ENCODE measurements at regions of chr2 and their contacts with region 1.

Region 1: GRCh38 chr2:73091164-73091563 is 19.7 kb upstream of the SFXN5 start:
- DNase-seq: no peak
- H3K4me3 ChIP-seq: no peak overlapping the region
- H3K27ac ChIP-seq: no peak overlapping the region
- H3K4me1 ChIP-seq: no peaks in the 10 kb centered on the region; a peak in 1 of 7 replicates
- H3K27me3 ChIP-seq: no peaks in the 10 kb centered on the region
- CTCF ChIP-seq: no peak
- EP300 ChIP-seq: no peak
- POLR2A ChIP-seq: no peak
- RAD21 ChIP-seq: no peak

Region 2: GRCh38 chr2:72803151-72803550 is 288.0 kb before region 1 on chr2:
- CTCF ChIA-PET with region 1: no interaction called
- POLR2A ChIA-PET with region 1: no interaction called
- DNase-seq: no peak
- H3K4me3 ChIP-seq: no peak overlapping the region
- H3K27ac ChIP-seq: no peak overlapping the region
- H3K4me1 ChIP-seq: no peaks in the 10 kb centered on the region
- H3K27me3 ChIP-seq: no peaks in the 10 kb centered on the region
- CTCF ChIP-seq: no peak
- EP300 ChIP-seq: no peak
- POLR2A ChIP-seq: no peak
- RAD21 ChIP-seq: no peak

Region 3: DNA sequence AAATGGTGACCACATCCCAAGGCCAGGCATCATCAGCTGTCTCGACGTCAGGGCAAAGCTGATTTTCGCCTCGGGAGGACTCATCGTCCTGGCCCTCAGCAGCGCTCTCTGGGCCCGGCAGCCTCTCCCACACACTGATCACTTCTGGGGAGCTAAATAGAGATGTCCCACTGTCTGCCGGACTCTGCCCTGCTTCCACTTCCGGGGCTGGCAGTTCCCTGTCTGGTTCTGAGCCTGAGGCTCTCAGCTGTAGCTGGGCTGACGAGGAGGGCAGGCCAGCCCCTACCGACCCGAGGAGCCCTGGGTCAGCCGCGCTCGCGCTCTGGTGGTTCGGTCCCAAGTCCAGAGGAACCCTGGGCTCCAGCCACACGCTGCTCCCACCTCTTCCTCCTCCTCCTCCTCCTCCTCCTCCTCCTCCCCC is 10.4 kb before region 1 on chr2:
- CTCF ChIA-PET with region 1: interaction called, 55 read pairs
- POLR2A ChIA-PET with region 1: interaction called, 4 read pairs
- DNase-seq: no peak
- H3K4me3 ChIP-seq: no peak overlapping the region
- H3K27ac ChIP-seq: no peak overlapping the region
- H3K4me1 ChIP-seq: peaks cover 0 to 9% (median 5%) of the 10 kb centered on the region in 4 experiments; a peak in 6 of 7 replicates
- H3K27me3 ChIP-seq: no peaks in the 10 kb centered on the region
- CTCF ChIP-seq: no peak
- EP300 ChIP-seq: no peak
- POLR2A ChIP-seq: no peak
- RAD21 ChIP-seq: no peak

Region 4: GRCh38 chr2:73112913-73113633 is 21.9 kb after region 1 on chr2 and contains the start of gene RAB11FIP5:
- CTCF ChIA-PET with region 1: interaction called, 63 read pairs
- POLR2A ChIA-PET with region 1: interaction called, 17 read pairs
- DNase-seq: peak in 1 of 2 experiments; percentile 91
- H3K4me3 ChIP-seq: peak within 1 kb of the TSS; percentile 58 to 73 (median 66)
- H3K27ac ChIP-seq: no peak within 1 kb of the TSS
- H3K4me1 ChIP-seq: peaks cover 10 to 14% (median 12%) of the 10 kb centered on the region in 4 experiments; a peak in 6 of 7 replicates
- H3K27me3 ChIP-seq: no peaks in the 10 kb centered on the region; a peak in 2 of 7 replicates
- CTCF ChIP-seq: no peak
- EP300 ChIP-seq: no peak
- POLR2A ChIP-seq: 0 out of 3 replicates have a peak, but pooled peaks of 1 of the 2 experiments have one; percentile 26
- RAD21 ChIP-seq: no peak
- total RNA-seq, gene RAB11FIP5: 13.5 and 17.0 TPM in 2 replicates

Measured in H1 (cell line).